ENCODE measurements at regions of chr18 and their contacts with region 1.

Region 1: DNA sequence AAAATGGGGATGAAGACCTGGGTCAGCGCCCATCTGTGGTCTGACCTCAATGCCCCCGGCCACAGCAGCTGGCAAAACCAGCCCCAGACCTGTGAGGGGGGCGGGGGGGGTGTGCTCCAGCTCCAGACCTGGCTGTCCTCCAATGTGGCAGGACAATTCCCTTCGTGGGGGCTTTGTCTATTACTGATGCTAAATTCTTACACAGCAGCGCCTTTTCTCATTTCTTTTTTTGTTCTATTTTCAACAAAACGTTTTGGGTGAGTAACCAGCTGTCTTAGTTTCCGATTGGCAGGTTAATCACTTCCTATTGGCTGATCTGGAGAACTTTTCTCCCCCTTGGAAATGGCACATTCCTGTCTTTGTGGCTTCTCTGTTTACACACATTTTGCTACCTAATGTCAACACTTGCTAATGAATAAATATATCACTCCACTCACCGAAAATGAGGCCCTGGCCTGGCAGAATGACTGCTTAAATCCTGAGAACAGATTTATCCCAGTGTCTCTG is 4.4 kb downstream of the SMAD7 start:
- DNase-seq: no peak
- ATAC-seq: no peak
- H3K4me3 ChIP-seq: peak overlapping the region; percentile 80
- H3K27ac ChIP-seq: peak overlapping the region; percentile 92 to 99
- H3K4me1 ChIP-seq: peaks cover 50% of the 10 kb centered on the region
- CTCF ChIP-seq: no peak
- EP300 ChIP-seq: no peak
- POLR2A ChIP-seq: no peak
- RAD21 ChIP-seq: no peak

Region 2: GRCh38 chr18:48728204-48728833 is 218.1 kb before region 1 on chr18:
- CTCF ChIA-PET with region 1: no interaction called
- POLR2A ChIA-PET with region 1: no interaction called
- DNase-seq: no peak
- ATAC-seq: no peak
- H3K4me3 ChIP-seq: no peak overlapping the region
- H3K27ac ChIP-seq: no peak overlapping the region
- H3K4me1 ChIP-seq: no peaks in the 10 kb centered on the region
- CTCF ChIP-seq: no peak
- EP300 ChIP-seq: no peak
- POLR2A ChIP-seq: no peak
- RAD21 ChIP-seq: no peak

Region 3: DNA sequence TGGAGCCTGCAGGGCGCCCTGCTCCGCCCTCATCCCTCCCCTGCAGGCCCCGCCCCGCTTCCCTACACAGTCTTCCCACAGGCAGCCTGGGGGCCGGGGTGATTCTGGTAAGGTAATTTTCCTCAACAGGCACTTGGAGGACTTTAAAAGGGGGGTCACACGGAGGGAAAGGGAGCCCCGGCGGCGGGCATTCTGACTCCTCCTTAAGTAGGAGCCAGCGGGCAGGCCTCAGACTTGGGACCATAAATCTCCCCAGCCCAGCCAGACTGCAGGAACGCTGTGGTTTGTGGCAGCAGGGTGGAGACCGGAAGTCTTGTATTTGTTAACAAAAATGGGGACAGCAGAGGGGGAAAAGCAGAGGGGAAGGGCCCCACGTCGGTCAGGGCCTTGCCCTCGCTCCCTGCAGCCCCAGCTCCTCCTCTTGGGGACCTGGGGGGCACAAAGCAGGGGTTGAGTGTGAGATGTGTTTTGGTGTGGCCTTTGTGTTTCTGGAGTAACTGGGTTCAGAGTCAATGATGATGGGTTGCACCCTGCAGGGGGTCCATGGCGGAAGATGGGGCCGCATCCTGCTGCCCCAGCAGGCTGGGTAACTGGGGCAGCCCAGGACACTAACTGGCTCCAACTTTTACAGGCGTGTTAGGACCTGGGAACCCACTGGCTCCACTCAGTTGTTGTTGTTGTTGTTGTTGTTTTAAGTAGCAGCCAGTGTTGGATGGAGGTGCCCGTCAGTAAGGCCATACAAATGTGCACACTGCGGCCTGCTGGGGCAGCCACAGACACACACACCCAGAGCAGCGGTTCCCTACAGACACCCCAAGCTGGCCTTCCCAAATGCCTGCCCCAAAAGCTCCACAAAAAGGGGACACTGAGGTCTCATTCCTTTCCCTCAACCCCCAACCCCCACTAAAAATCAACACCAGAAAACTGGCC is 23.3 kb before region 1 on chr18:
- CTCF ChIA-PET with region 1: interaction called, 15 read pairs
- POLR2A ChIA-PET with region 1: interaction called, 13 read pairs
- DNase-seq: no peak
- ATAC-seq: peak; percentile 33 to 40; a peak in 3 of 6 replicates
- H3K4me3 ChIP-seq: peak overlapping the region; percentile 20; the same call in 2 of the 3 replicates
- H3K27ac ChIP-seq: peak overlapping the region; percentile 84 to 99
- H3K4me1 ChIP-seq: peaks cover 99% of the 10 kb centered on the region
- CTCF ChIP-seq: no peak
- EP300 ChIP-seq: no peak
- POLR2A ChIP-seq: no peak
- RAD21 ChIP-seq: no peak

Region 4: DNA sequence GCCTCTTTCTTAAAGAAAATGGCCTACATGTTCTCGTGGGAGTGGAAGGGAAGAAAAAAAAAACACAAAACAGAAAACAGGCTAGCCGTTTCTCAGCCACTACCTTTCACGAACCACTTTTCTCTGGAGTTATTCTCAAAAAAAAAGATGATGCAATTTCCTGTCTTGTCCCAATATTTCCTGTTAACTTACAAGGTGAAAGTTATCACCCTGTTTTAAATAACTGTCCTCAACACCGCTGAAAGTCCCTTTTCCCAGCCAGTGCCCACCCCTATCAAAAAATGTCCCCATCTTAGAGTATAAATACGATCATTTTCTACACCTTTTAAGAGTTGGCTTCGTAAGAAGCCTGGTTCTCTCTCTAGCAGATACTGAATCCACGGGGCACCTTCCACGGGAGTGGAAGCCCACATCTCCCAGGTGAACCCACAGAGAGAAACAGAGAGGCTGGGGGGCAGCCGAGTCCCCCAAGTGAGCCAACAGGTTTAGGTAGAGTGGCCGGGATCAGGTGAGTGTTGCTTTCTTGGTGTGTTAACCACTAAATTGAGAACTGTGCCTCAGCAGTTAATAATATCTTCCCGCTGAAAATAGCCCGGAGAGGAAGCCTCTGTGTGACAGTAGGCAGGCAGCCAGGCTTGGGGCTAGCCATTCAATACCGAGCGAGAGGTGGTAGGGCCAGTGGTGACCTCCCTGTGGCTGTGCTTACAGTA is 11.5 kb before region 1 on chr18:
- CTCF ChIA-PET with region 1: interaction called, 11 read pairs
- POLR2A ChIA-PET with region 1: interaction called, 11 read pairs
- DNase-seq: no peak
- ATAC-seq: no peak
- H3K4me3 ChIP-seq: no peak overlapping the region
- H3K27ac ChIP-seq: peak overlapping the region; percentile 94 to 99
- H3K4me1 ChIP-seq: peaks cover 96% of the 10 kb centered on the region
- CTCF ChIP-seq: no peak
- EP300 ChIP-seq: no peak
- POLR2A ChIP-seq: no peak
- RAD21 ChIP-seq: no peak

Region 5: DNA sequence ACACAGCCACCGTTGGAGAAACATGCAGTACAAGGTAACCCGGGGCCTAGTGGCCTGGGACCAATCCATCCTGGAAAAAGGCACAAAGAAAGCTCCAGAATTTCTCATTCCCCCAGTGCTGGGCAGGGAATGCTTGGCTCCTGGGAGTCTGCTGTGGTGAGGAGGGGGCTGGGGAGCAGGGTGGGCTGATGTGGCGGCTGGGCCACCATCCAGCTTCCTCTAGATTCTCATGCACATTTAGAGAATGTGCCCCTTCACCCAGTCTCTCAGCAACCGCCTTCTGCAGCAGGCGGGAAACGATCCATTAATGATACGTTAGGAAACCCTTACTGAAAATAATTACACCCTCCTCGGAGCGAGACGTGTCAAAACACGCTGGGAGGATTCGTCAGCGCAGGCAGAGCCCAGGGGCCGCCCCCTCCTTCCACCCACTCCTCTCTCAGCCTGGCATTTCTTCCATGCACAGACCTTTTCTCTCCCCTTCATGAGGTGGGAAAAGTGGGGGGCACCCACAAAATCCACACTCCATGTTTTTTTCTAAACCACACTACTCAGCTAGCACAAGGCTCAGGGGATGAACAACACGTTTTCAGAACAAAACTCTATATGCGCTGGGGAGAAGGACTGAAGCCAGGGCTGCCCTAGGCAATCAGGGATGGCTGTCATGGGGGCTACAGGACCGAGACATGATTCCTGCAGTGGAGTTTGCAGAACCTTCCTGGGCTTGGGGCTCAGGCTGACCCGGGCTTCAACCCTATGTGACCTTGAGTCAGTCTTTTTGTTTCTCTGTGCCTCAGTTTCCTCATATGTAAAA is 60.5 kb after region 1 on chr18:
- CTCF ChIA-PET with region 1: no interaction called
- POLR2A ChIA-PET with region 1: no interaction called
- DNase-seq: no peak
- ATAC-seq: no peak
- H3K4me3 ChIP-seq: no peak overlapping the region
- H3K27ac ChIP-seq: peak overlapping the region in 1 of 2 experiments; percentile 62; a peak in 3 of 6 replicates
- H3K4me1 ChIP-seq: peaks cover 9% of the 10 kb centered on the region; the same call in 2 of the 3 replicates
- CTCF ChIP-seq: no peak
- EP300 ChIP-seq: no peak
- POLR2A ChIP-seq: no peak
- RAD21 ChIP-seq: no peak

Region 6: GRCh38 chr18:49041435-49042245 is 95.3 kb after region 1 on chr18:
- CTCF ChIA-PET with region 1: interaction called, 10 read pairs
- POLR2A ChIA-PET with region 1: no interaction called
- DNase-seq: peak in 1 of 2 experiments; percentile 43
- ATAC-seq: peak in 1 of 2 experiments; percentile 83; a peak in 3 of 6 replicates
- H3K4me3 ChIP-seq: no peak overlapping the region
- H3K27ac ChIP-seq: peak overlapping the region; percentile 27 to 64; a peak in 2 of 6 replicates
- H3K4me1 ChIP-seq: 0 out of 3 replicates have a peak, but pooled peaks cover 3% of the 10 kb centered on the region
- CTCF ChIP-seq: peak; percentile 38; the same call in 2 of the 3 replicates
- EP300 ChIP-seq: no peak
- POLR2A ChIP-seq: no peak
- RAD21 ChIP-seq: peak; percentile 47 to 61

Region 7: GRCh38 chr18:49170925-49171505 is 224.6 kb after region 1 on chr18:
- CTCF ChIA-PET with region 1: no interaction called
- POLR2A ChIA-PET with region 1: no interaction called
- DNase-seq: no peak
- ATAC-seq: no peak
- H3K4me3 ChIP-seq: no peak overlapping the region
- H3K27ac ChIP-seq: no peak overlapping the region
- H3K4me1 ChIP-seq: peaks cover 12% of the 10 kb centered on the region; the same call in 1 of the 3 replicates
- CTCF ChIP-seq: no peak
- EP300 ChIP-seq: no peak
- POLR2A ChIP-seq: no peak
- RAD21 ChIP-seq: no peak